Endothelial cell of umbilical vein (primary cell): ENCODE measurements at regions of chr3 and their contacts with region 1.

Region 1: DNA sequence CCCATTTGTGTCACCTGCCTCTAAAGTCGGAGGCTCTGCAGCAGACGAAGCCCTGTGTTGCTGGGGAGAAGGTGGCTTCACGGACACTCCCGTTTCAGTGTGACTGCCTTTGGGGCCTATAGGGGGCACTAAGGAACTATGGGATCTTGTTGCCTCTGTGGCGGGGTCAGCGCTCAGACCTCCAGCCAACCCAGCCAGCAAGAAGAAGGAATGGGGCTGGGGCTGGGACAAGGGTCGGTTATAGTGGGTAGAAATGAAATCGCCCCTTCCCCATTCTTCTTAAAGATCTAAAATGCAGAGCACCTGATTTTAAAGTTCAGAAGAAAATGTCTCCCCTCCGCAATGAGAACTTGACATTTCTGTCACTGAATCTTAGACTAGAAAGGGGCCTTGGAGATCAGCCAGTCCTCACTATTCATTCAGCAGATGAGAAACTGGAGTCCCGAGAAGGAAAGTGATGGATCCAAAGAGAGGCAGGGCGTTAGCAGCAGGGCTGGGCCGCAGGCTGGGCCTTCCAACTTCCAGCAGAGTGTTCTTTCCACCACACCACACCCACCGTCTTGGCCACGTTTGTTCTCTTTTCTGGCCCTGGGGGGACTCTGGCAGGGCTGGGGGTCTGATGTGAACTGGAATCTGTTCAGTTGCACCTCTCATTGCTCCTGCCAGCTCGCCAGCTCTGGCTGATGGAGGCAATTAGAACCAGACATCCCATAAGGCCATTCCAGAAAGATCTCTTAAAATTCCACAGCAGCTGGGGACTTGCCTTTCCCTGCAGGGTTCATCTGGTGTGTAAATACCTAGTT is 195.4 kb downstream of the OPA1 start:
- DNase-seq: peak; percentile 76
- H3K4me3 ChIP-seq: no peak overlapping the region
- H3K27ac ChIP-seq: no peak overlapping the region
- H3K4me1 ChIP-seq: peaks cover 5% of the 10 kb centered on the region
- H3K27me3 ChIP-seq: peaks cover 0 to 1% of the 10 kb centered on the region in 2 experiments
- CTCF ChIP-seq: peak; percentile 82 to 88
- POLR2A ChIP-seq: no peak

Region 2: DNA sequence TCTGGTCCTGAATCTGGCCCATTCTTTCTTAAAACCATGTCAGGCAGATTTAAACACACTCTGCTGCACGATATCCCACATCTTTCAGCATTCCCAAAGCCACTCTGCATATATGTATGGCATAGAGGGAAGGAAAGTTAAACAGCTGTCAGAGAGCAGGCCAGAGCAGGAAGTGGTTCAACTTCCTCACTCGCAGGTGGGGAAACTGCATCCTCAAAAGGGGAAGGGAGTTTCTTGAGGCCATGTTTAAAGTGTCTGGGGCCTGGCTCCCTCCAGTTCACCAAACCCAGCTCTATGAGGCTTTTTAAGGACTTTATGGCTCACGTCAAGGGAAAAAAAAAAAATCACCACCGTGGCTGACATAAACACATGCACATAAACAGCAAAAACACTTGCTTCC is 72.2 kb before region 1 on chr3:
- CTCF ChIA-PET with region 1: no interaction called
- POLR2A ChIA-PET with region 1: no interaction called
- dilution Hi-C with region 1: no loop called
- intact Hi-C with region 1: no loop called
- DNase-seq: no peak
- H3K4me3 ChIP-seq: no peak overlapping the region
- H3K27ac ChIP-seq: no peak overlapping the region
- H3K4me1 ChIP-seq: no peaks in the 10 kb centered on the region
- H3K27me3 ChIP-seq: peaks cover 2 to 3% of the 10 kb centered on the region in 2 experiments
- CTCF ChIP-seq: no peak
- POLR2A ChIP-seq: no peak

Region 3: DNA sequence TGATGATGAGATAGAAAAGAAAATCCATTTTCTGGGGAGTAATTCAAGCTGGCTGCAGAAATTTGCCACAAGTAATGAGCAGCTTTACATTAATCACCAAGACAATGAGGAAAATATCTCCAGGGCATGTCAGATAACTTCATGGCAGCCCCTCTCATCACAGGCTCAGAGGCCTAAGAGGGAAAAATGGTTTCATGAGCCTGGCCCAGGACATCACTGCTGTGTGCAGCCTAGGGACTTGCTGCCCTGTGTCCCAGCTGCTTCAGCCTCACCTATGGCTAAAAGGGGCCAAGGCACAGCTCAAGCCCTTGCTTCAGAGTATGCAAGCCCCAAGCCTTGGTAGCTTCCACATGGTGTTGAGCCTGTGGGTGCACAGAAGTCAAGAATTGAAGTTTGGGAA is 33.7 kb before region 1 on chr3:
- CTCF ChIA-PET with region 1: no interaction called
- POLR2A ChIA-PET with region 1: no interaction called
- dilution Hi-C with region 1: no loop called
- intact Hi-C with region 1: no loop called
- DNase-seq: no peak
- H3K4me3 ChIP-seq: no peak overlapping the region
- H3K27ac ChIP-seq: no peak overlapping the region
- H3K4me1 ChIP-seq: no peaks in the 10 kb centered on the region
- H3K27me3 ChIP-seq: peaks cover 9 to 10% of the 10 kb centered on the region in 2 experiments
- CTCF ChIP-seq: no peak
- POLR2A ChIP-seq: no peak

Region 4: GRCh38 chr3:193872265-193872753 is 83.9 kb after region 1 on chr3:
- CTCF ChIA-PET with region 1: interaction called, 3 read pairs
- POLR2A ChIA-PET with region 1: no interaction called
- dilution Hi-C with region 1: no loop called
- intact Hi-C with region 1: loop called (anchors 2 kb)
- DNase-seq: peak; percentile 72
- H3K4me3 ChIP-seq: no peak overlapping the region
- H3K27ac ChIP-seq: peak overlapping the region; percentile 6
- H3K4me1 ChIP-seq: peaks cover 33% of the 10 kb centered on the region
- H3K27me3 ChIP-seq: no peaks in the 10 kb centered on the region
- CTCF ChIP-seq: no peak
- POLR2A ChIP-seq: peak; percentile 30

Region 5: DNA sequence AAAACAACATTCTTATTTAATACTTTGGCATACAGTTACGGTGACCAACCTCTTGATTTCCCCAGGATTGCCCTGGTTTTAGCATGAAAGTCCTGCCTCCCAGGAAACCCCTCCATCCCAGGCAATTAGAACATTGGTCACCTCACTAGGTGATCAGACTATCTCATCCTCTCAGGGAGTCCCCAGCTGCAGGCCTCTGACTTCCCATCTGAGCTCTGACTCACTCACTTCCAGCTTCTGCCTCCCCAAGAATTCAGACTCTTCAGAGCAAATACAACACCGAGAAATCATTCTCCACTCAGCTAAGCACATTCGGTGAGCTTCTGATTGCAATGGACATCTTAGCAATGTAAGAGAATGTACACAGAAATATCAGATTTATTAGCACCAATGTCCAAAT is 255.1 kb after region 1 on chr3:
- CTCF ChIA-PET with region 1: interaction called, 10 read pairs
- POLR2A ChIA-PET with region 1: no interaction called
- dilution Hi-C with region 1: no loop called
- intact Hi-C with region 1: loop called (anchors 5 kb)
- DNase-seq: peak; percentile 77
- H3K4me3 ChIP-seq: no peak overlapping the region
- H3K27ac ChIP-seq: peak overlapping the region; percentile 56
- H3K4me1 ChIP-seq: peaks cover 35% of the 10 kb centered on the region
- H3K27me3 ChIP-seq: no peaks in the 10 kb centered on the region
- CTCF ChIP-seq: no peak
- POLR2A ChIP-seq: no peak

Region 6: GRCh38 chr3:194089357-194090177 is 301.2 kb after region 1 on chr3:
- CTCF ChIA-PET with region 1: no interaction called
- POLR2A ChIA-PET with region 1: no interaction called
- dilution Hi-C with region 1: no loop called
- intact Hi-C with region 1: loop called (anchors 1 kb)
- DNase-seq: peak; percentile 99
- H3K4me3 ChIP-seq: no peak overlapping the region
- H3K27ac ChIP-seq: peak overlapping the region; percentile 94
- H3K4me1 ChIP-seq: peaks cover 22% of the 10 kb centered on the region
- H3K27me3 ChIP-seq: no peaks in the 10 kb centered on the region
- CTCF ChIP-seq: no peak
- POLR2A ChIP-seq: no peak